ENCODE measurements at regions of chr15 and their contacts with region 1.

Region 1: DNA sequence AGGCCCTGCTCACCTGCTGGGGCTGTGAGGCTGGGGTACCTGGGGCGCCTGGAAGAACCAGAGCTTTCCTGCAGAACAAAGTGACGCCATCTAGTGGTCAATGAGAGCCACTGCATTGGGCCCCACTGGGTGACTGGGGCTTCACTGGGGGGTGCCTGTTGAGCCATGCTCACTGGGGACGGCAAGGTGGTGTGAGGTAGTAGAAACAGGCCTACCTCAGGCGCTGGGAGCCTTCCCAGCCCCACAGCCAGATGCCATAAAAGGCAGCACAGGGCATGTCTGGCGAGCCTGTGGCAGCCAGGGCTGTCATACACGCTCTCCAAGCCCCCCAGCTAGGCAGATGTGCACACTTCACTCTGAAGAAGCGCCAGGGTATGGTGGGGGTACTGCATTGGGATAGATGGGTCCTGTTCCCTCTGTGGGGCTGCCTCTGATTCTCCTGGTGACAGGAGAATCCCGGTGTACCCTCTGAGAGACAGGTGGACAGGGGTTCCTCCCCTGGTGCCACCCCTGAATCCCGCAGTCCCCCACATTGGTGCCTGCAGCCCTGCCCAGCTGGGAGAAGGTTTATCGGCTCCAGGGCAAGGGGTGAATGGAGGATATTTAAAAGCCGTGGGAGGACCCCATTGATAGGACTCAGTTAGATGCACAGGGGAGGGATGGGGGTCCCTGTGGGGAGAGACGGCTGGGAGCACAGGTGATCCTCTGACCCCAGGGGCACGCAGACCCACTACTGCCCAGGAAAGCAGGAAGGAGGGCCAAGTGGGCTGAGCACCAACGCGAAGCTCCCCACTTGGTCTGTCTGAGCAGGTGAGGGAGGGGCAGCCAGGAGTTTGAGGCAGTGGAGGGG is 178.8 kb downstream of the NSMCE3 start:
- DNase-seq: peak; percentile 21
- H3K4me3 Mint-ChIP-seq: no peak overlapping the region
- H3K27ac Mint-ChIP-seq: no peak overlapping the region
- H3K4me1 Mint-ChIP-seq: no peaks in the 10 kb centered on the region
- H3K27me3 Mint-ChIP-seq: no peaks in the 10 kb centered on the region
- CTCF ChIP-seq: peak; percentile 88

Region 2: DNA sequence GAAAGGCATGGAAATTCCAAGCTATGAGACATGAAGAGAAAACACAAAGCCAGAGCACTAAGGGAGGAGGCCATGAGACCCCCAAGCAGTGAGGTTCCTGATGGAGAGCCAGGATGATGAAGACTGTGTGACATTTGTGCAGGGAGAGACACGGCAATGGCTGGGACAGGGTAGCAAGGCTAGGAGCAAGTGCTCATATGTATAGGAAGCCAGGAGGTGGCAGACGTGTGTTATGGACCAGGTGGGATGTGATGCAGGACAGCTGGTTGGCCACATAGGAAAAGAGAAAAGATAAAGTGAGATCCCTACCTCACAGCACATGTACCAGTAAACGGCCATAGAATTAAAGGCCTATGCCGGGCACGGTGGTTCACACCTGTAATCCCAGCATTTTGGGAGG is 92.3 kb before region 1 on chr15:
- CTCF ChIA-PET with region 1: no interaction called
- POLR2A ChIA-PET with region 1: no interaction called
- intact Hi-C with region 1: loop called (anchors 1 kb)
- DNase-seq: peak; percentile 16
- H3K4me3 Mint-ChIP-seq: no peak overlapping the region
- H3K27ac Mint-ChIP-seq: no peak overlapping the region
- H3K4me1 Mint-ChIP-seq: peaks cover 5% of the 10 kb centered on the region
- H3K27me3 Mint-ChIP-seq: peaks cover 9% of the 10 kb centered on the region
- CTCF ChIP-seq: peak; percentile 19

Region 3: GRCh38 chr15:29064290-29064689 is 26.6 kb before region 1 on chr15:
- CTCF ChIA-PET with region 1: no interaction called
- POLR2A ChIA-PET with region 1: no interaction called
- intact Hi-C with region 1: no loop called
- DNase-seq: no peak
- H3K4me3 Mint-ChIP-seq: no peak overlapping the region
- H3K27ac Mint-ChIP-seq: no peak overlapping the region
- H3K4me1 Mint-ChIP-seq: no peaks in the 10 kb centered on the region
- H3K27me3 Mint-ChIP-seq: no peaks in the 10 kb centered on the region
- CTCF ChIP-seq: no peak

Region 4: GRCh38 chr15:29102912-29103823 is 12.3 kb after region 1 on chr15:
- CTCF ChIA-PET with region 1: interaction called, 10 read pairs
- POLR2A ChIA-PET with region 1: no interaction called
- intact Hi-C with region 1: no loop called
- DNase-seq: no peak
- H3K4me3 Mint-ChIP-seq: no peak overlapping the region
- H3K27ac Mint-ChIP-seq: no peak overlapping the region
- H3K4me1 Mint-ChIP-seq: no peaks in the 10 kb centered on the region
- H3K27me3 Mint-ChIP-seq: no peaks in the 10 kb centered on the region
- CTCF ChIP-seq: no peak

Measured in MCF 10A (cell line).